Naive thymus-derived CD4-positive, alpha-beta T cell (primary cell): ENCODE measurements at regions of chr21 and their contacts with region 1.

Region 1: GRCh38 chr21:42117229-42117966 is 46.3 kb downstream of the UMODL1 start:
- DNase-seq: peak; percentile 48 to 82 (median 70)
- ATAC-seq: peak; percentile 91
- H3K4me3 ChIP-seq: no peak overlapping the region
- H3K4me3 Mint-ChIP-seq: peak overlapping the region in 7 of 10 donors; percentile 31 to 82 (median 57)
- H3K27ac ChIP-seq: no peak overlapping the region
- H3K27ac Mint-ChIP-seq: peak overlapping the region in 3 of 9 donors; percentile 6 to 65 (median 52)
- H3K4me1 ChIP-seq: peaks cover 0 to 5% of the 10 kb centered on the region in 2 donors
- H3K4me1 Mint-ChIP-seq: peaks cover 18 to 33% (median 25%) of the 10 kb centered on the region in 7 donors
- H3K27me3 ChIP-seq: peaks cover 0 to 5% of the 10 kb centered on the region in 2 donors
- H3K27me3 Mint-ChIP-seq: peaks cover 44 to 68% (median 53%) of the 10 kb centered on the region in 5 donors

Region 2: DNA sequence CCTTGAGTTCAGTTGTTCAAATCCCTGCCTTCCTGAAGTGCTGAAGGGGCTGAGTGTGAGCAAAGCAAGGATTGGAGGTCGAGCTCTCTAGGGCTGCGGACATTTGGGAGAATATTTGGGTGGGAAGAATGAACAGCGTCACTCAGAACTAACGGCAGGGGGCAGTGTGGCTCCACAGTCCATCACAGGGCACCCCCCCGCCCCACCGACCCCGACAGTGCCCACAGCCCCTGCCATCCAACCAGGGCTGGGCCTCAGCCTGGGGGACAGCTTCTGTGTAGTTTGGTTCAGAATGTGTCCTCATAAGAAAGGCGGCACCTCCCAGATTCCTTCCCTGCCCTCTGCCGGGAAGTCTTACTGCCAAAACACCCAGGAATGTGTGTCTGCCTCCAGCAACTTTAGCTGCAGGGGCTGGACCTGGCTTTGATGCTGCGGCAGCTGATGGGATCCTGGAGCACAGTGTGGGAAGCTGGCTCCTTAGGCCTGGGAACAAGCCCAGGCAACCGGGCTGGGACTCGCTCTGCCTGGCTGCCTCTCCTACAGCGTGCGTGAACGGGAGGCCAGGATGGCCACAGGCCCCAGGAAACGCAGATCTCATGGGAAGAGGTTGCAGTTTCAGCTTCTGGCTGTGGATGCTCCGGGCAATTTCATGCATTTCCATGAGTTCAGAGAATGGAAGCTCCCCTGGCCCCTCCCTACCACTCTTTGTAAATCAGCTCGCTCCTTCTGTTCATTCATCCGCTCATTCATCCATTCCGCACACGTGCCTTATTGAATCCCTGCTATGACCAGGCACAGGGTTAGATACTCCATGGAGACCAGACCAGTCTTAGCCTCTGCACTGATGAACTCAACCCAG is 504.5 kb before region 1 on chr21:
- CTCF ChIA-PET with region 1: interaction called, 3 read pairs
- POLR2A ChIA-PET with region 1: no interaction called
- intact Hi-C with region 1: loop called in 1 of 2 experiments (anchors 2 kb)
- DNase-seq: no peak
- ATAC-seq: peak; percentile 42
- H3K4me3 ChIP-seq: no peak overlapping the region
- H3K4me3 Mint-ChIP-seq: peak overlapping the region in 1 of 10 donors; percentile 24
- H3K27ac ChIP-seq: no peak overlapping the region
- H3K27ac Mint-ChIP-seq: no peak overlapping the region
- H3K4me1 ChIP-seq: no peaks in the 10 kb centered on the region
- H3K4me1 Mint-ChIP-seq: no peaks in the 10 kb centered on the region
- H3K27me3 ChIP-seq: peaks cover 0 to 4% of the 10 kb centered on the region in 2 donors
- H3K27me3 Mint-ChIP-seq: peaks cover 20 to 62% (median 38%) of the 10 kb centered on the region in 5 donors

Region 3: DNA sequence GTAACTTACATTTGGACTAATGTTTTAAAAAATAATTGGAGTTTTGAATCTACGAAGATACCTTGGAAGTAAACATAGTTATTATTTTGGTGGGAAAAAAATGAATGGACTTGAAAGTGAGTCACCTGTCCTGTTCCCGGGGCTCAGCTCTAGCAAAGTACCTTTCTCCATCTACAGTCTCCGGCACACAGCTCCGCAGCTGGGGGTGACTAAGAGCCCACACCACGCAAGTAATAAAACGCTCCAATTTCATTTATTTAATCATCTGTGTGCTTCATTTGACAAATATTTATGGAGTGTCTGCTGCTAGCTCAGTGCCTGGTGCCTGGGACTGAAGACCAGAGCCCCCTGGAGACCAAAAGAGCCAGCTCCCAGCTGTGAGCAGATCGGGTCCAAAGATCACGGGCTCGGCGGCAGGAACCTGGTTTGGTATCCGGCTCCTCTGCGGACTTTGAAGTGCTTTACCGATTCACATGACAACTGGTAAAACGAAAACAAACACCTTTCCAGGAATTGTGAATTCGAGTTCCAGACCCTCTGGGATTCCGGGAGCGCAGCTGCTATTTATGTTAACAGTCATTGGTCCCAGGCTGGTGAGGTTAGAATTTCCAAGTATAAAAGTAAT is 348.8 kb before region 1 on chr21:
- CTCF ChIA-PET with region 1: no interaction called
- POLR2A ChIA-PET with region 1: no interaction called
- intact Hi-C with region 1: no loop called
- DNase-seq: peak in 6 of 9 donors; percentile 15 to 47 (median 34)
- ATAC-seq: no peak
- H3K4me3 ChIP-seq: peak overlapping the region; percentile 64
- H3K4me3 Mint-ChIP-seq: peak overlapping the region; percentile 85 to 97 (median 87)
- H3K27ac ChIP-seq: no peak overlapping the region
- H3K27ac Mint-ChIP-seq: peak overlapping the region in 5 of 9 donors; percentile 7 to 57 (median 19)
- H3K4me1 ChIP-seq: peaks cover 11 to 31% of the 10 kb centered on the region in 2 donors
- H3K4me1 Mint-ChIP-seq: peaks cover 23 to 30% (median 24%) of the 10 kb centered on the region in 7 donors
- H3K27me3 ChIP-seq: peaks cover 8 to 19% of the 10 kb centered on the region in 2 donors
- H3K27me3 Mint-ChIP-seq: peaks cover 59 to 83% (median 64%) of the 10 kb centered on the region in 5 donors

Region 4: DNA sequence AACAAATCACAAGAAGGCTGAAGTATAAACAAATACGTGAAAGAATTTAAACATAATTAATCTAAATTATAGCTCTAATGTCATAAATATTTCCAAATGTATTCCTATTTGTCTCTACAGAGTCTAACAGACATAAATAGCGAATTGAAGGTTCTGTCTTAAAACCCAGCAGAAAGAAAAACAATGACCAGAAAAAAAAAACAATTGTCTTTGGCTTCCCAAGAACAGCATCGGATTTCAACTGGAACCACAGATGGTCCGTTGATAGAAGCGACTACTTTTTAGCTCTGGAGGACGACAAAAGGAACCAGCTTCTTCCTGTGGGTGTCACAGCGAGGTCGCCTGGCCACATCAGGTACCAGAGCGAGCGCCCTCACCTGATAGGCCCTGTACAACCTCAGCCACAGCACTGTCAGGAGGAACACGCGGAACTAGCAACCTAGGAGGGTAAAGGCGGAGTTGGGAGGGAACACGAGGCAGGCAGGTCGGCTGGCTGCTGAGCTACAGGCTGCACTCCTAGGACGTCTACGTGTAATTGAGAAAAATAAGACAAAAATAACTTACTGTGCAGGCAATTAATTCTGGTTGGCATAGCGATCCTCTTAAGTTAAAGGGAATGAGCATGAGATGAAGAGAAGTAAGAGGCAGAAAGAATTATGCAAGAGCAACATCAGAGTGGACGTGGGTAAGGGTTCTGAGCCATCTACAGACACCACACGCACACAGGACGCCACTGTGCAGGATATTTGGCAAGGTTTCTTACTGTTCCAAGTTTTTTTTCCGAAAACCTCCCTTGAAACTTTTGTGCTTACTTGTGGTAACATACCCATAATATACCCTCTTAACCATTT is 221.5 kb before region 1 on chr21:
- CTCF ChIA-PET with region 1: interaction called, 11 read pairs
- POLR2A ChIA-PET with region 1: interaction called, 4 read pairs
- intact Hi-C with region 1: loop called in 1 of 2 experiments (anchors 1 kb)
- DNase-seq: peak in 8 of 9 donors; percentile 18 to 72 (median 58)
- ATAC-seq: peak; percentile 94
- H3K4me3 ChIP-seq: no peak overlapping the region
- H3K4me3 Mint-ChIP-seq: peak overlapping the region in 8 of 10 donors; percentile 35 to 70 (median 51)
- H3K27ac ChIP-seq: no peak overlapping the region
- H3K27ac Mint-ChIP-seq: peak overlapping the region; percentile 34 to 91 (median 71)
- H3K4me1 ChIP-seq: peaks cover 4 to 16% of the 10 kb centered on the region in 2 donors
- H3K4me1 Mint-ChIP-seq: peaks cover 9 to 35% (median 21%) of the 10 kb centered on the region in 7 donors
- H3K27me3 ChIP-seq: no peaks in the 10 kb centered on the region
- H3K27me3 Mint-ChIP-seq: no peaks in the 10 kb centered on the region